Activated T-helper 2 cell treated with anti-CD3 and anti-CD28 coated beads, Interferon-gamma antibody, Interleukin-2, Interleukin-4, amounts not matched to agents 10 μg/mL and 5 μg/mL and 100 μg/mL, durations not matched to agents 14 hours and 24 hours and 36 hours (primary cell): ENCODE measurements at regions of chr11 and their contacts with region 1.

Region 1: DNA sequence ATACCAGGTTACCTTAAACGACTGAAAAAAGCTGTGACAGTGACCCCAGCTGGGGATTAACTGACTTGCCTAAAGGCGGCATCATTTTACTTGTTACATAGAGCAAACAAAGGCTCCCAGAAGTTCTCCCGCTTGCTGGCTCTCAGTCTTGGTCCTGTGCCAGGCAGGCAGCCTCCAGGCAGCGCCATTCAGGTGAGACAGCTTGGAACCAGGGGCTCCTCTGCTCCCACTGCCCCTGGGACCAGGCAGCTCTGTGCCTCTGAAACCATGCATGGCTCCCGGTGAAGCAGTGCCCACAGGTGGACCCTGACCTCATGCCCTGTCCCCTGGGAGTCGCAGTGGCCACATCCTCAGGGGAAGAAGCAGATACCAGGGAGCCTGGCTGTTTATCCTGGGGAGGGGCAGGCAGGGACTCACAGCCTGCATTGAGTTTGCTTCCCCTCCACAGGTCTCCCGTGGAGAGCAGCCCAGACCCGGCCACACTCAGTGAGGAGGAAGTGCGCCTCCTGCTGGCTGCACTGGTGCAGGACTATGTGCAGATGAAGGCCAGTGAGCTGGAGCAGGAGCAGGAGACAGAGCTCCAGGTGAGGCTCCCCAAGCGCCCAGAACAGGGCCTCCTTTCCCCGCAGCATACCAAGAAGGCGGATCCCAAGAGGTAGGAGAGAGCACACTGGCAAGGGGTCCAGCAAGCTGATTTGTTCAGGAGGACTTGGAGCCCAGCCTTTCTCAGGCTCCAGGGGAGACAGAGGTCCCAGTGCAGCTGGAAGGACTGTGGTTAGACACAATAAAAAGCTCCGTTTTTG is 15.6 kb upstream of the CYP2R1 start:
- DNase-seq: peak; percentile 79
- H3K4me3 Mint-ChIP-seq: no peak overlapping the region
- H3K27ac Mint-ChIP-seq: no peak overlapping the region
- H3K4me1 Mint-ChIP-seq: peaks cover 41% of the 10 kb centered on the region
- H3K27me3 Mint-ChIP-seq: no peaks in the 10 kb centered on the region

Region 2: GRCh38 chr11:14519917-14520746 is 387.5 kb before region 1 on chr11 and contains the start of gene PSMA1:
- intact Hi-C with region 1: loop called (anchors 1 kb)
- DNase-seq: peak; percentile 92
- H3K4me3 Mint-ChIP-seq: peak within 1 kb of the TSS; percentile 90
- H3K27ac Mint-ChIP-seq: peak within 1 kb of the TSS; percentile 89
- H3K4me1 Mint-ChIP-seq: peaks cover 27% of the 10 kb centered on the region
- H3K27me3 Mint-ChIP-seq: no peaks in the 10 kb centered on the region
- total RNA-seq, gene PSMA1: 319 and 329 TPM in 2 replicates

Region 3: DNA sequence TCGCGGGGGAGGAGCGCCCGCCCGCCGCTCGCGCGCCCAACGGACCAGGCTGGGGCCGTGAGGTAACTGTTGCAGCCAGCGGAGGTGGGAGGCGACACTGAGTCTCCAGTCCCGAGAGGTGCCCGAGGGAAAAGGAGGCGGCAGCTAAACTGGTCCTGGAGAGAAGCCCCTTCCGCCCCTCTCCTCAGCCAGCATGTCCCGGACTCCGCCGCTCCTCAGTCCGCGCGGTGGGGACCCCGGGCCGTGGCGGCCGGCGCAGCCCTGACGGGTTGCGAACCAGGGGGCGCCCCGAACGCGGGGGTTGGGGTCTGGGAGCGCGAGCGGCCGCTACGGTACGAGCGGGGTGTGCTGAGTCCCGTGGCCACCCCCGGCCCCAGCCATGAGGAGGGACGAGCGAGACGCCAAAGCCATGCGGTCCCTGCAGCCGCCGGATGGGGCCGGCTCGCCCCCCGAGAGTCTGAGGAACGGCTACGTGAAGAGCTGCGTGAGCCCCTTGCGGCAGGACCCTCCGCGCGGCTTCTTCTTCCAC is 263.9 kb before region 1 on chr11 and contains the start of gene PDE3B:
- intact Hi-C with region 1: loop called (anchors 2 kb)
- DNase-seq: peak; percentile 75
- H3K4me3 Mint-ChIP-seq: peak within 1 kb of the TSS; percentile 93
- H3K27ac Mint-ChIP-seq: peak within 1 kb of the TSS; percentile 87
- H3K4me1 Mint-ChIP-seq: peaks cover 46% of the 10 kb centered on the region
- H3K27me3 Mint-ChIP-seq: no peaks in the 10 kb centered on the region
- total RNA-seq, gene PDE3B: 58.8 and 62.1 TPM in 2 replicates

Region 4: GRCh38 chr11:14892036-14892567 is 15.5 kb before region 1 on chr11 and contains the start of gene CYP2R1:
- intact Hi-C with region 1: loop called (anchors 1 kb)
- DNase-seq: peak; percentile 89
- H3K4me3 Mint-ChIP-seq: peak within 1 kb of the TSS; percentile 88
- H3K27ac Mint-ChIP-seq: peak within 1 kb of the TSS; percentile 98
- H3K4me1 Mint-ChIP-seq: peaks cover 53% of the 10 kb centered on the region
- H3K27me3 Mint-ChIP-seq: no peaks in the 10 kb centered on the region
- total RNA-seq, gene CYP2R1: 18.2 and 20.8 TPM in 2 replicates

Region 5: GRCh38 chr11:15006139-15006759 is 98.6 kb after region 1 on chr11:
- intact Hi-C with region 1: loop called (anchors 1 kb)
- DNase-seq: no peak
- H3K4me3 Mint-ChIP-seq: no peak overlapping the region
- H3K27ac Mint-ChIP-seq: no peak overlapping the region
- H3K4me1 Mint-ChIP-seq: no peaks in the 10 kb centered on the region
- H3K27me3 Mint-ChIP-seq: peaks cover 58% of the 10 kb centered on the region

Region 6: GRCh38 chr11:15208378-15209222 is 301.0 kb after region 1 on chr11:
- intact Hi-C with region 1: loop called (anchors 1 kb)
- DNase-seq: peak; percentile 57
- H3K4me3 Mint-ChIP-seq: no peak overlapping the region
- H3K27ac Mint-ChIP-seq: no peak overlapping the region
- H3K4me1 Mint-ChIP-seq: no peaks in the 10 kb centered on the region
- H3K27me3 Mint-ChIP-seq: peaks cover 8% of the 10 kb centered on the region